HepG2 (cell line): ENCODE measurements at regions of chr14 and their contacts with region 1.

Region 1: DNA sequence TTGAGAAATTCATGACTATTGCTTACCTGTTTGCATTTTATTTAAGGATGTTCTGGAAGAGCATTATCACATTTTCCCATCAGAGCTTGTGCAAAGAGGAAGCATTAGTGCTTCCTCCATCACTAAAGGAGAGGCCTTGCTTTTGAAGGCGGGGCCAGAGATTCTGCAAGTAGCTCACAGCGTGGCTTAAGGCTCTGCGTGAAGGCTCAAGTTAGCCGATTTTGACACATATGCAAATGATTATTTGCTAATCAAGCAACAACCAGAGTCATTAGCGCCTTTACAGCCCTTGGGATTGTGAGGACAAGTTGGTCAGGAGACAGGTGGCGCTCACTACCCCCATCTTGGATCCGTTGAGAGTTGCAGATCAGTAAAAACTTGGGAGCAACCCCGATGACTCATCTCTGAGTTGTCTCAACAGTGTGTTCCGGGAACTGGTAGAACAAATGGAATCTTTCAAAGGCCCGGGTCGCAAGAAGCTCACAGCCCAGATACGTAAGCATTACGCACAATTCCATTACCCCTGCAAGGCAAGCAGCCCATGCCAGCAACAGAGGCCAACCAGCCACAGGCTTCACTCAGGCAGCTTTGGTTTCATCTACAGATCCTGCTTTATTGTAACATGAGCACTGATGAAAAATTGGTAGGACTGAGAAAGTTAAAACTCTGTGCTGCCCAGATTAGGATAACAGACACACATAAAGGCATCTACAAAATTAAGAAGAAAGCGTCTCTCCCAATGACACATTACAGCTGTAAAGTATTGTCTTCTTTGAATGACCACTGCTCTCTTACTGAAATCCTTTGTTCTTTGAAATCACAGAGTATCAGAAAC is 34.9 kb upstream of the SPTSSA start:
- DNase-seq: peak; percentile 99
- ATAC-seq: peak; percentile 71
- H3K4me3 ChIP-seq: peak overlapping the region; percentile 6 to 56 (median 15)
- H3K27ac ChIP-seq: peak overlapping the region; percentile 86
- H3K4me1 ChIP-seq: peaks cover 68% of the 10 kb centered on the region
- H3K27me3 ChIP-seq: no peaks in the 10 kb centered on the region
- CTCF ChIP-seq: peak; percentile 80
- EP300 ChIP-seq: peak; percentile 81 to 88
- POLR2A ChIP-seq: peak in 1 of 2 experiments; percentile 76; a peak in 1 of 4 replicates
- RAD21 ChIP-seq: peak; percentile 51; the same call in 1 of the 2 replicates

Region 2: GRCh38 chr14:33839193-33840076 is 657.5 kb before region 1 on chr14:
- CTCF ChIA-PET with region 1: no interaction called
- POLR2A ChIA-PET with region 1: no interaction called
- in situ Hi-C with region 1: no loop called
- intact Hi-C with region 1: loop called (anchors 10 kb)
- DNase-seq: peak; percentile 58
- ATAC-seq: peak; percentile 85
- H3K4me3 ChIP-seq: no peak overlapping the region
- H3K27ac ChIP-seq: no peak overlapping the region
- H3K4me1 ChIP-seq: no peaks in the 10 kb centered on the region
- H3K27me3 ChIP-seq: peaks cover 5 to 26% of the 10 kb centered on the region in 2 experiments; a peak in 3 of 5 replicates
- CTCF ChIP-seq: peak; percentile 96
- EP300 ChIP-seq: no peak
- POLR2A ChIP-seq: no peak
- RAD21 ChIP-seq: peak; percentile 87

Region 3: GRCh38 chr14:34365309-34365915 is 131.5 kb before region 1 on chr14:
- CTCF ChIA-PET with region 1: interaction called, 21 read pairs
- POLR2A ChIA-PET with region 1: interaction called, 3 read pairs
- in situ Hi-C with region 1: loop called (anchors 10 kb)
- intact Hi-C with region 1: loop called (anchors 1 kb)
- DNase-seq: peak; percentile 59
- ATAC-seq: peak; percentile 75
- H3K4me3 ChIP-seq: peak overlapping the region in 1 of 3 experiments; percentile 1; a peak in 1 of 6 replicates
- H3K27ac ChIP-seq: no peak overlapping the region
- H3K4me1 ChIP-seq: peaks cover 35% of the 10 kb centered on the region
- H3K27me3 ChIP-seq: peaks cover 0 to 2% of the 10 kb centered on the region in 2 experiments; a peak in 1 of 5 replicates
- CTCF ChIP-seq: peak; percentile 62
- EP300 ChIP-seq: no peak
- POLR2A ChIP-seq: no peak
- RAD21 ChIP-seq: peak; percentile 55; the same call in 1 of the 2 replicates

Region 4: GRCh38 chr14:34436118-34436880 is 60.6 kb before region 1 on chr14:
- CTCF ChIA-PET with region 1: interaction called, 3 read pairs
- POLR2A ChIA-PET with region 1: interaction called, 3 read pairs
- in situ Hi-C with region 1: no loop called
- intact Hi-C with region 1: loop called (anchors 1 kb)
- DNase-seq: peak; percentile 55
- ATAC-seq: peak; percentile 19; the same call in 2 of the 3 replicates
- H3K4me3 ChIP-seq: no peak overlapping the region; a peak in 1 of 6 replicates
- H3K27ac ChIP-seq: peak overlapping the region; percentile 41
- H3K4me1 ChIP-seq: peaks cover 27% of the 10 kb centered on the region
- H3K27me3 ChIP-seq: no peaks in the 10 kb centered on the region
- CTCF ChIP-seq: no peak
- EP300 ChIP-seq: no peak
- POLR2A ChIP-seq: no peak
- RAD21 ChIP-seq: no peak

Region 5: GRCh38 chr14:34453229-34453628 is 43.7 kb before region 1 on chr14:
- CTCF ChIA-PET with region 1: no interaction called
- POLR2A ChIA-PET with region 1: interaction called, 63 read pairs
- in situ Hi-C with region 1: no loop called
- intact Hi-C with region 1: loop called (anchors 1 kb)
- DNase-seq: no peak
- ATAC-seq: peak; percentile 26
- H3K4me3 ChIP-seq: no peak overlapping the region
- H3K27ac ChIP-seq: peak overlapping the region; percentile 10
- H3K4me1 ChIP-seq: peaks cover 72% of the 10 kb centered on the region
- H3K27me3 ChIP-seq: no peaks in the 10 kb centered on the region
- CTCF ChIP-seq: no peak
- EP300 ChIP-seq: no peak
- POLR2A ChIP-seq: peak in 1 of 2 experiments; percentile 42; a peak in 1 of 4 replicates
- RAD21 ChIP-seq: peak; percentile 41; the same call in 1 of the 2 replicates

Region 6: GRCh38 chr14:34461334-34462131 is 35.4 kb before region 1 on chr14:
- CTCF ChIA-PET with region 1: interaction called, 9 read pairs
- POLR2A ChIA-PET with region 1: interaction called, 63 read pairs
- in situ Hi-C with region 1: loop called (anchors 5 kb)
- intact Hi-C with region 1: loop called (anchors 1 kb)
- DNase-seq: peak; percentile 89
- ATAC-seq: peak; percentile 75
- H3K4me3 ChIP-seq: peak overlapping the region; percentile 68 to 94 (median 73)
- H3K27ac ChIP-seq: peak overlapping the region; percentile 77
- H3K4me1 ChIP-seq: peaks cover 72% of the 10 kb centered on the region
- H3K27me3 ChIP-seq: no peaks in the 10 kb centered on the region; a peak in 1 of 5 replicates
- CTCF ChIP-seq: 0 out of 2 replicates have a peak, but pooled peaks have one; percentile 23
- EP300 ChIP-seq: no peak; a peak in 2 of 4 replicates
- POLR2A ChIP-seq: peak in 1 of 2 experiments; percentile 86; a peak in 2 of 4 replicates
- RAD21 ChIP-seq: no peak; the same call in 1 of the 2 replicates

Region 7: GRCh38 chr14:34539407-34540180 is 42.7 kb after region 1 on chr14 and contains the start of gene EAPP:
- CTCF ChIA-PET with region 1: no interaction called
- POLR2A ChIA-PET with region 1: interaction called, 14 read pairs
- in situ Hi-C with region 1: no loop called
- intact Hi-C with region 1: loop called (anchors 5 kb)
- DNase-seq: peak; percentile 100
- ATAC-seq: peak; percentile 96
- H3K4me3 ChIP-seq: peak within 1 kb of the TSS; percentile 86 to 99 (median 92)
- H3K27ac ChIP-seq: peak within 1 kb of the TSS; percentile 95
- H3K4me1 ChIP-seq: peaks cover 25% of the 10 kb centered on the region
- H3K27me3 ChIP-seq: peaks cover 0 to 4% of the 10 kb centered on the region in 2 experiments; a peak in 1 of 5 replicates
- CTCF ChIP-seq: peak; percentile 51
- EP300 ChIP-seq: peak; percentile 65 to 77; a peak in 3 of 4 replicates
- POLR2A ChIP-seq: peak; percentile 99
- RAD21 ChIP-seq: peak; percentile 79
- total RNA-seq, gene EAPP: 110 and 163 TPM in 2 replicates